OCI-LY7 (cell line): ENCODE measurements at regions of chr16 and their contacts with region 1.

Region 1: DNA sequence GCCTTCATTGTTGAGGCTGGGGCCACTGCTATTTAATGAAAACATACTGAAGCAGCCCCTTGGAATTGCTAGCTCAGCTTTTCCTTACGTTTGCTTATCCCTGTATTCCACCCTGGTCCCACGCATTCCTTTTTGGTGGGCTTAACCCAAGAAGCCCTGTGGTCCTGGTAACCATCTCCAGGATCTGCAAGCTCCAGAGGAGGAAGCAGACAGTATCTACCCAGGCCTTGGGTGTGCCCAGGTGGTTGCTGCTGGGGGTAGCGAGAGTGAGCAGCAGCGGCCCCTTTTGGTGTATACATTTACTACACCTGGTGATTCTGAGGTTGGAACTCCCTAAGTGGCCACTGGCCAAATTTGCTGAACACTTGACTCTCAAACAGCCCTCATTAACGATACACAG is 97.7 kb downstream of the CBLN1 start:
- DNase-seq: peak; percentile 64
- H3K4me3 ChIP-seq: no peak overlapping the region
- H3K27ac ChIP-seq: no peak overlapping the region
- H3K4me1 ChIP-seq: peaks cover 8% of the 10 kb centered on the region
- CTCF ChIP-seq: peak; percentile 83

Region 2: DNA sequence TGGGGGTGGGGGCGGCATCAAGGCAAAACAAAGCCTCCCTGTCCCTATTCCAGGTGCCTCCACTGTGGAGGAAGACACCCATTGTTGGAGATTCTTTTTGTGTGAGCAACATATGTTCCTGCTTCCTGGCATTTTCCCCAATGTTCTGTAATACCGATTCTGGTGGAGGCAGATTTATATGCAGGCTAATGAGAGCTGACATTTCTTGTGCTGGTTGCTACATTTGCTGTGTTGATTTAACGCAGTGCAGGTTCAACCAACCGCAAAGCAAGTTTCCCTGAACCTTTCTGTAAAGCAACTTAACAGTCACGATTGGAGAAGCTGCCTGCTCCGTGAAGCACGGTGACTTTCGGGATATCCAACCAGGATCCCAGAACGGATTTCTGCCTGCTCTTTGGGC is 162.8 kb before region 1 on chr16:
- CTCF ChIA-PET with region 1: interaction called, 4 read pairs
- POLR2A ChIA-PET with region 1: no interaction called
- intact Hi-C with region 1: loop called (anchors 10 kb)
- DNase-seq: no peak
- H3K4me3 ChIP-seq: no peak overlapping the region
- H3K27ac ChIP-seq: no peak overlapping the region
- H3K4me1 ChIP-seq: no peaks in the 10 kb centered on the region
- CTCF ChIP-seq: no peak

Region 3: DNA sequence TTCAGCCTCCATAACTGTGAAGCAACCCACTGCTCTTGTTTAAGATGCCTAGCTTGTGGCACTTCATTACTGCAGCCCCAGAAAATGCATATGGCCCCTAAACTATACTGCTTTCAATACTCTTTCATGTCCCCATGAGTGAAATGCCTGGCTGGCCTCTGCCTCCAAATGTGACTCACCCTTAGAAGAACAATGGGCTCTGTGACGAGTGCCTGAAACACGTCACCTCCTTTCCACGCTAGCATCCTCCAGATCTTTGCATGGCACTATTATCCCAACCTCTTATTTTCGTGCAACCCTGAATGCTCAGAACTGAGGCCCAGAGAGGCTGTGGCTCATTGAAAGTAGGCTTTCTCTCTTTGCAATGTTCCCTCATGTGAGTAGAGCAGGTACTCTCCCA is 135.4 kb before region 1 on chr16:
- CTCF ChIA-PET with region 1: no interaction called
- POLR2A ChIA-PET with region 1: no interaction called
- intact Hi-C with region 1: no loop called
- DNase-seq: no peak
- H3K4me3 ChIP-seq: no peak overlapping the region
- H3K27ac ChIP-seq: no peak overlapping the region
- H3K4me1 ChIP-seq: no peaks in the 10 kb centered on the region
- CTCF ChIP-seq: no peak

Region 4: DNA sequence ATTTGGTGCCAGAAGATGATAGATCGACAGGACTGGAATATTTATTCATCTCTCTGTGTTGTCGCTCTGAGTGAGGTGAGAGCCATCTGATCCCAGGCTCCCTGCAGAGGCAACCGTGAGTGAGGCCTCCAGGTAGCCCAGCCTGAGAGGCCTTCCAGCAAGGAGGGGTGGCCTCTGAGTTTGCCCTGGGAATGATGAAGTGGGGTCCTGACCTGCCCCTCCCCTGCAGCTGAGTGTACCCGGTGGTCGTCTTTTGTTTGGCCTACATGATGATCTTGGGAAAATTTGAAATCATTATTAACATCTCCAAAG is 11.3 kb after region 1 on chr16:
- CTCF ChIA-PET with region 1: no interaction called
- POLR2A ChIA-PET with region 1: no interaction called
- intact Hi-C with region 1: no loop called
- DNase-seq: no peak
- H3K4me3 ChIP-seq: no peak overlapping the region
- H3K27ac ChIP-seq: no peak overlapping the region
- H3K4me1 ChIP-seq: no peaks in the 10 kb centered on the region
- CTCF ChIP-seq: no peak